Activated CD8-positive, alpha-beta T cell treated with anti-CD3 and anti-CD28 coated beads for 36 hours (primary cell): ENCODE measurements at regions of chr5 and their contacts with region 1.

Region 1: DNA sequence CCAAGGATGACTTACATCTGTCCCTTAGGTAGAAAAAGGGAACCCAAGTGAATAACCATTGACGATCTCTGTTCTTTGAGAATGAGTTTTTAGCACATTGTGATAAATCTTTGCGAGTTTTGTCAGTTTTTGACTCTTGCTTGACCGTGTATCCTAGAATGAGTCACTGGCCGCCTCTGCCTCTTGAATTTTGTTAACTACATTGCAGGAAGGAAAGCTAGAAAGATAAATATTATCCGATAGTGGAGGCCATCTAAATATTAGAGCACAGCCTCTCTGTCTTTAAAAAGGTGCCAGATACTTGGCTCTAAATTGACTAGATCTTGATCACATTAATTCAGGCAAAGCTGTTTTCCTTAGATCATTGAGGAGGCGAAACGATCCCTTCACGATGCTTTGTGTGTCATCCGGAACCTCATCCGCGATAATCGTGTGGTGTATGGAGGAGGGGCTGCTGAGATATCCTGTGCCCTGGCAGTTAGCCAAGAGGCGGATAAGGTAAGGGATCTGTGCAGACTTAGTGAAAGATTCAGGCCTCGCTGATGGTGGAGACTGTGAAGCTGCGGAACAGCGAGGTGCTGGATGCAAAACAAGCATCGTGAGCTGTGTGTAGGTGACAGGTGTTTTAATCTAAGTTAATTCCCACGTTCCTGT is 12.2 kb downstream of the CCT5 start:
- DNase-seq: no peak
- ATAC-seq: no peak
- H3K4me3 Mint-ChIP-seq: no peak overlapping the region
- H3K27ac Mint-ChIP-seq: no peak overlapping the region
- H3K4me1 Mint-ChIP-seq: peaks cover 10% of the 10 kb centered on the region
- H3K27me3 Mint-ChIP-seq: no peaks in the 10 kb centered on the region
- CTCF ChIP-seq: no peak

Region 2: GRCh38 chr5:10235350-10235749 is 26.9 kb before region 1 on chr5:
- CTCF ChIA-PET with region 1: no interaction called
- POLR2A ChIA-PET with region 1: no interaction called
- intact Hi-C with region 1: no loop called
- DNase-seq: no peak
- ATAC-seq: no peak
- H3K4me3 Mint-ChIP-seq: no peak overlapping the region
- H3K27ac Mint-ChIP-seq: no peak overlapping the region
- H3K4me1 Mint-ChIP-seq: no peaks in the 10 kb centered on the region
- H3K27me3 Mint-ChIP-seq: no peaks in the 10 kb centered on the region
- CTCF ChIP-seq: no peak

Region 3: DNA sequence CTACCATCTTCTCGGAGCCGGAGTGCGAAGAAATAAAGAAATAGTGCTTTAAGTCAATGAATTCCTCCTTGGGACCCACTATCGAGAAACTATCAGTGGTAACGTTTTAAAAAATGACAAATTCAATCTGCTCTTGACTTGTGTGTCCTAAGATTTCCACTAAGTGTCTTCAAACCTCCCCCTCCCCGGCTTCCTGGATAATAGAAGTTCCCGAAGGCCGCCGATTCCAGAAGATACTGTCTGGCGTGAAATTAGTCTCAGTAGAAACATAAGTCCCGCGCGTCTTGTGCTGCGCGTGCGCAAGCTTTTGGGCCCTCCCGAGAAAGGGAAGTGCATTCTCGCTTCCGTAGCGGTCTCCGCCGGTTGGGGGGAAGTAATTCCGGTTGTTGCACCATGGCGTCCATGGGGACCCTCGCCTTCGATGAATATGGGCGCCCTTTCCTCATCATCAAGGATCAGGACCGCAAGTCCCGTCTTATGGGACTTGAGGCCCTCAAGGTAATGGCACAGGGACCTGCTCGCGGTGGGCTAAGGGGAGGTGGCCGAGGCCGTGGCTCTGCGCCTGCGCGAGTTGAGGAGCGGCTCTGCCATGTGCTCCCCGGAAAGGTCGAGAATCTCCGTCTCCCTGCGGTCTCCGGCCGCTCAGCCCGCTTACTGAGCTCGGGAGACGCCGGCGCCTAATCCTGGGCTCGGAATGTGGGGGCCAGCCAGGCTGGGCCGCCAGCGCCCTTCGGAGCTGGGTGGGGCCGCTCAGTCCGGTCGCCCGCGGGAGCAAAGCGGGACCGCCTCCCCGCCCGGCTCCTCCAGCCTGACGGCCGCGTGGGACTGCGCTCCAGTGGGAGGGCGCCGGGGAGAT is 12.1 kb before region 1 on chr5 and contains the start of gene CCT5:
- CTCF ChIA-PET with region 1: no interaction called
- POLR2A ChIA-PET with region 1: interaction called, 26 read pairs
- intact Hi-C with region 1: no loop called
- DNase-seq: peak; percentile 92
- ATAC-seq: peak; percentile 84
- H3K4me3 Mint-ChIP-seq: peak within 1 kb of the TSS; percentile 84
- H3K27ac Mint-ChIP-seq: peak within 1 kb of the TSS; percentile 99
- H3K4me1 Mint-ChIP-seq: peaks cover 42% of the 10 kb centered on the region
- H3K27me3 Mint-ChIP-seq: no peaks in the 10 kb centered on the region
- CTCF ChIP-seq: no peak
- total RNA-seq, gene CCT5: 461 to 481 TPM